GM23248 (cell line): ENCODE measurements at regions of chr10 and their contacts with region 1.

Region 1: DNA sequence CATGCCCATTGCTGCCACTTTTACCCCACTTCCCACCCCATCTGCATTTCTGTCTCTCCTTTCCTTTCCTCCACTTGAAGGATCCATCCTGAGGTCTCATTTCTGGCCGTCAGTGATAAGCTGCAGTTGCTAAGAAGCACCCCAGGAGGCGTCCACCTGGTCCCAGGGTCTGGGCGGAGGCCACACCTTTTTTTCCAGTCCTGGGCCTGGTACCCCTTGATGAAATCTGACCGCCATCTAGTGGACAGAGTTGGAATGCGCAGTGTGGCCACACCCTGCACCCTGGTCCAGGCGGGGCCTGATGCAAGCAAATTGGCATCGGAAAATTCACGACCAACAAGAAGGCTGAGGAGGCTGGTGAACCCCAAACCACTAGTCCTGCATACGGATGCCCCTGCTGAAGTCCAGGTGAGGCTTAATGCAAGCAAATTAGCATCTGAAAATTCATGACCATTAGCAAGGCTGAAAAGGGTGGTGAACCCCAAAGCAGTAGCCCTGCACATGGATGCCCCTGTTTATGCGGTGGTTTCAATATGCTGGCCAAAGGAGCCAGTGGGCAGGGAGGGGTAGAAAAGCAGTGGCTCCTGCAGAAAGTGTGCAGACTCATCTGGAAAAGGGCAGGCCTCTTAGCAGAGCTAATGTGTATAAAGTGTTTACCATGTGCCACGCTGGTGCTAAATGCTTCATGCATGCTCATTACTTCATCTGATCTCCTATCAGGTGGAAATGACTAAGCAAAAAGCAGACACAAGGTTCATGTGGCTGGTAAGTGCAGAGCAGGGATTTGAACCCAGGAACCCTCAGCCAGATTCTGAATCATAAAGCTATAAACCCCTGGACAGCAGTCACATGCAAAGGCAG is 43.2 kb downstream of the GPAM start:
- DNase-seq: peak; percentile 81
- H3K4me3 ChIP-seq: no peak overlapping the region
- H3K27ac ChIP-seq: no peak overlapping the region
- H3K4me1 ChIP-seq: no peaks in the 10 kb centered on the region
- H3K27me3 ChIP-seq: no peaks in the 10 kb centered on the region

Region 2: GRCh38 chr10:110774069-110775019 is 1366.0 kb before region 1 on chr10:
- in situ Hi-C with region 1: loop called (anchors 25 kb)
- DNase-seq: peak; percentile 92
- H3K4me3 ChIP-seq: no peak overlapping the region
- H3K27ac ChIP-seq: peak overlapping the region; percentile 43
- H3K4me1 ChIP-seq: peaks cover 12% of the 10 kb centered on the region
- H3K27me3 ChIP-seq: peaks cover 47% of the 10 kb centered on the region

Region 3: DNA sequence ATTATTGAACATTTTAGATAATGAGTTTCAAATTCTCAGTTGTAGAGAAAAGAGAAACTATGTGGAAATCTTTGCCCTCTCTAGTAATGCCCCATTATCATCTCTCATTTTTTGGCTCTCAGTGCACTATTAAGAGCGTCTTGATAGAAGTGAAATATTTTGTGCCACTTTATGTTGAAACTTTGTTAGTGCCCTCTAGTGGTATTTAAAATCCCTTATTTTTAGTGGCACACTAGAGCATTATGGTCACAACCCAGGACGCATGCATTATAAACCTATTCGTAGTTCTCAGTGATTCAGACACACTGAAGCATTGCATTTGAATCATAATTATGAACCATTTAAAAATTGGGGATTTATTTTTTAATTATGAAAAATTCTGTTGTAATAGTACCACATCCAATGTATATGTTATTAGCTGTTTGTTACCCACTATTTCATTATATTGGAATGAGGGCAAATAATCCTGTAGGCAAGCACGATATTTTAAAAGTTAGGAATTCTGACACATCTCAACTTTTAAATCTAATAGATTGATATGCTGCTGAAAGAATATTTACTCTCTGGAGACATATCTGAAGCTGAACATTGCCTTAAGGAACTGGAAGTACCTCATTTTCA is 1246.7 kb before region 1 on chr10:
- in situ Hi-C with region 1: loop called (anchors 25 kb)
- DNase-seq: peak; percentile 72
- H3K4me3 ChIP-seq: no peak overlapping the region
- H3K27ac ChIP-seq: no peak overlapping the region
- H3K4me1 ChIP-seq: peaks cover 15% of the 10 kb centered on the region
- H3K27me3 ChIP-seq: no peaks in the 10 kb centered on the region

Region 4: GRCh38 chr10:111063471-111063870 is 1076.9 kb before region 1 on chr10:
- in situ Hi-C with region 1: loop called (anchors 10 kb)
- DNase-seq: no peak
- H3K4me3 ChIP-seq: no peak overlapping the region
- H3K27ac ChIP-seq: no peak overlapping the region
- H3K4me1 ChIP-seq: no peaks in the 10 kb centered on the region
- H3K27me3 ChIP-seq: no peaks in the 10 kb centered on the region; the same call in 1 of the 2 replicates

Region 5: GRCh38 chr10:111360260-111360925 is 779.9 kb before region 1 on chr10:
- in situ Hi-C with region 1: loop called (anchors 25 kb)
- DNase-seq: peak; percentile 62
- H3K4me3 ChIP-seq: no peak overlapping the region
- H3K27ac ChIP-seq: no peak overlapping the region
- H3K4me1 ChIP-seq: 0 out of 2 replicates have a peak, but pooled peaks cover 7% of the 10 kb centered on the region
- H3K27me3 ChIP-seq: no peaks in the 10 kb centered on the region